ENCODE measurements at regions of chr5 and their contacts with region 1.

Region 1: GRCh38 chr5:68344447-68345111 is 129.0 kb downstream of the PIK3R1 start:
- DNase-seq: peak; percentile 49 to 79
- H3K4me3 ChIP-seq: no peak overlapping the region
- H3K27ac ChIP-seq: peak overlapping the region; percentile 87
- H3K4me1 ChIP-seq: peaks cover 29% of the 10 kb centered on the region
- H3K27me3 ChIP-seq: no peaks in the 10 kb centered on the region
- CTCF ChIP-seq: no peak

Region 2: GRCh38 chr5:68396722-68397121 is 52.1 kb after region 1 on chr5:
- CTCF ChIA-PET with region 1: no interaction called
- POLR2A ChIA-PET with region 1: no interaction called
- intact Hi-C with region 1: loop called (anchors 1 kb)
- DNase-seq: peak; percentile 32 to 91
- H3K4me3 ChIP-seq: peak overlapping the region; percentile 31; the same call in 1 of the 2 replicates
- H3K27ac ChIP-seq: peak overlapping the region; percentile 75
- H3K4me1 ChIP-seq: peaks cover 29% of the 10 kb centered on the region
- H3K27me3 ChIP-seq: no peaks in the 10 kb centered on the region
- CTCF ChIP-seq: no peak

Region 3: DNA sequence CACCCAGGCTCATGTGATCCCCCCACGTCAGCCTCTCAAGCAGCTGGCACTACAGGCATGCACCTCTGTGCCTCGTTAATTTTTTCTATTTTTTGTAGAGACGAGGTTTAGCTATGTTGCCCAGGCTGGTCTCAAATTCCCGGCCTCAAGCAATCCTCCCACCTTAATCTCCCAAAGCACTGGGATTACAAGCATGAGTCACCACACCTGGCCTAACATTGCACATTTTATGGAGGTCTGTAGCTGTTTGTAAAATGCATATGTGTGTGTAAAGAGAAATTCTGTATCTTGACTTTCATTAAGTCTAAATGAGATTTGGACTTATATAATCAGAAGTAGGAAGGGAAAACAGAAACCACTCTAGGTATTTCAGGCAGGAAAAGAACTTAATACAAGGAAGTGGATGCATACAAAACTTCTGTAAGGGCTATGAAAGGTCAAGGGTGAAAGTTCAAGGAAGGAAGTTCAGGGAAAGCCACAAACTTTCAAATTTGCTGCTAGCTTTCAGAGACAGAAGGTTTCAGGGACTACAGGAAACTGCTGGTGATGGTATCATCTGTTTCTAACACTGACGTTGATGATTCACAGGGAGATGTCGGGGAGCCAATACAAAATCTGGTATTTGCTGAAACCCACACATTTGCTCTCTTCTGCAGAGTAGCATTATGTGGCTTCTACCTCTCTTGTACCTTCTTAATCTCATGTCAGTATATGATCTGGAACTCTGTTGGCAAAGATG is 80.4 kb after region 1 on chr5:
- CTCF ChIA-PET with region 1: no interaction called
- POLR2A ChIA-PET with region 1: no interaction called
- intact Hi-C with region 1: no loop called
- DNase-seq: peak; percentile 4 to 81
- H3K4me3 ChIP-seq: no peak overlapping the region
- H3K27ac ChIP-seq: peak overlapping the region; percentile 74
- H3K4me1 ChIP-seq: peaks cover 35% of the 10 kb centered on the region
- H3K27me3 ChIP-seq: no peaks in the 10 kb centered on the region
- CTCF ChIP-seq: no peak

Region 4: DNA sequence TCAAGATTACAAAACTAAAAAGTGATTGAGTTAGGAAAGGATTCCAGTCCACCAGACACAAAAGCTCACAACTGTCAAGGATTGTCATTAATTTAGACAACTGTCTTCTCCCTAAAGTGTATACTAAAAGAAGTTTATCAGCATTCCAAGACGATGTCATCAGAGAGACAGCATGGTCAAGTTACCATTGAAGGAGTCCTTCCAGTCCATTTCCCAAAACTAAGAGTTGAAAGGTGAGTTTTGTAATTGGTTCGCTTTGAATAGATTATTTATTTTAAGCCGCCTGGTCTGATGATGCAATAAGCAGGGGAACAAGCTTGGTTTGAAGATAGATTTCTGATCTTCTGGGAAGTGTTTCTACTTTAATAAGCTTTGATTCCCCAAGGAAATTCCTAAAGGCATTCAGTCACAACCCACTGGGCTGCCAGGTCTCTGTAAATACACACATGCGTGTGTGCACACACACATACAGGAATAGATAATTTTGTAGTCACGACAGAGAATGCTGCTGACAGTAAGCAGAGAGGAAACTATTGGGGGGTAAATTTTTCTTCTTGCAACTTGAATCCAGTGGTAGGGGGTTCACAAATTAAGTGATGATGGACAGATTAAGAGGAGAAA is 105.8 kb after region 1 on chr5:
- CTCF ChIA-PET with region 1: no interaction called
- POLR2A ChIA-PET with region 1: no interaction called
- intact Hi-C with region 1: loop called (anchors 1 kb)
- DNase-seq: peak; percentile 28 to 98
- H3K4me3 ChIP-seq: no peak overlapping the region
- H3K27ac ChIP-seq: peak overlapping the region; percentile 75
- H3K4me1 ChIP-seq: peaks cover 66% of the 10 kb centered on the region
- H3K27me3 ChIP-seq: no peaks in the 10 kb centered on the region
- CTCF ChIP-seq: no peak

Region 5: GRCh38 chr5:69234457-69235268 is 890.1 kb after region 1 on chr5 and contains the start of gene CDK7:
- CTCF ChIA-PET with region 1: no interaction called
- POLR2A ChIA-PET with region 1: no interaction called
- intact Hi-C with region 1: no loop called
- DNase-seq: peak; percentile 88 to 92
- H3K4me3 ChIP-seq: peak within 1 kb of the TSS; percentile 72
- H3K27ac ChIP-seq: peak within 1 kb of the TSS; percentile 38
- H3K4me1 ChIP-seq: peaks cover 43% of the 10 kb centered on the region
- H3K27me3 ChIP-seq: no peaks in the 10 kb centered on the region
- CTCF ChIP-seq: no peak
- total RNA-seq, gene CDK7: 51.6 and 60.5 TPM in 2 replicates

Measured in PC-9 (cell line).